Calu3 (cell line): ENCODE measurements at regions of chr14 and their contacts with region 1.

Region 1: GRCh38 chr14:79011091-79011919 is 841.1 kb downstream of the NRXN3 start:
- DNase-seq: peak; percentile 6
- H3K4me3 Mint-ChIP-seq: no peak overlapping the region
- H3K27ac Mint-ChIP-seq: no peak overlapping the region
- H3K4me1 Mint-ChIP-seq: no peaks in the 10 kb centered on the region
- H3K27me3 Mint-ChIP-seq: peaks cover 13% of the 10 kb centered on the region
- CTCF ChIP-seq: no peak

Region 2: GRCh38 chr14:78785265-78785664 is 226.0 kb before region 1 on chr14:
- CTCF ChIA-PET with region 1: no interaction called
- intact Hi-C with region 1: no loop called
- DNase-seq: no peak
- H3K4me3 Mint-ChIP-seq: no peak overlapping the region
- H3K27ac Mint-ChIP-seq: no peak overlapping the region
- H3K4me1 Mint-ChIP-seq: peaks cover 12% of the 10 kb centered on the region
- H3K27me3 Mint-ChIP-seq: no peaks in the 10 kb centered on the region
- CTCF ChIP-seq: no peak

Region 3: DNA sequence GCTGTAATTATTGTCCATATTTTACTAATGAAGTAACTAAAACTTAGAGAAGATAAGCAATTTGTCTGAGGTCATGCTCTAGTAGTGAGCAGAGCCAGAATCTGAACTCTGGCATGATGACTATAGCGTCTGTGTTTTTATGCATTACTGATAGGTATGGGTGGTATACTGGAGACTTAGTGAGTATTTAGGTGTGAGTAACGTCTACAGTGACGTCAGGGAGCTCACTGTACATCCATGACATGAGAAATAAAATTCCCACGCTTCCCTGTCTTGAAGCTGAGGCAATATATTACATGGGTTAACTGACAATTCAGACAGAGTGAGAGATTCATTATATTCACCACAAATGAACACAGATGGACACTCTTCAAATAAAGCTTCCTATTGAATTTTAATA is 120.0 kb before region 1 on chr14:
- CTCF ChIA-PET with region 1: no interaction called
- intact Hi-C with region 1: no loop called
- DNase-seq: no peak
- H3K4me3 Mint-ChIP-seq: no peak overlapping the region
- H3K27ac Mint-ChIP-seq: no peak overlapping the region
- H3K4me1 Mint-ChIP-seq: no peaks in the 10 kb centered on the region
- H3K27me3 Mint-ChIP-seq: peaks cover 36% of the 10 kb centered on the region
- CTCF ChIP-seq: no peak

Region 4: GRCh38 chr14:78974691-78975090 is 36.6 kb before region 1 on chr14:
- CTCF ChIA-PET with region 1: interaction called, 10 read pairs
- intact Hi-C with region 1: no loop called
- DNase-seq: no peak
- H3K4me3 Mint-ChIP-seq: no peak overlapping the region
- H3K27ac Mint-ChIP-seq: no peak overlapping the region
- H3K4me1 Mint-ChIP-seq: no peaks in the 10 kb centered on the region
- H3K27me3 Mint-ChIP-seq: peaks cover 20% of the 10 kb centered on the region
- CTCF ChIP-seq: no peak